ENCODE measurements at regions of chr18 and their contacts with region 1.

Region 1: DNA sequence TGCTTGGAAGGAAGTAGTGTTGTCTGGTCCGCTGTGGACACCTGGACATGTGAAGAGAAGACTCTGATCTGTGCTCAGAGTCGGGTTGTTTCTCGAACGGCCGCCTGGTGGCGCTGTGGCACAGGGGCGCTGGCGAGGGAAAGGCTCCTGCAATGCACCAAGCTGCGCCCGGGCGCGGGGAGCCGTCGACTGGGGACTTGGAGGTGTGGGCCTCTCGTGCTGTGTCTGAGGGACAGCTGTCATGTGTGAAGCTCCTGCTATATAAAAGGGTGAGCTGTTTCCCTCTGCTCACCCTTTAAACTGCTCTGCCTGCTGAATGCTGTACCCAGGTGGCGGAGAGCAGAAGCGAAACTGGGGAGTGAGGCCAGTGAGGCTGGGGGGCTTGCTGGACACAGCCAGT is 44.0 kb downstream of the GNAL start:
- DNase-seq: peak; percentile 54 to 97
- H3K4me3 ChIP-seq: no peak overlapping the region
- H3K27ac ChIP-seq: no peak overlapping the region
- H3K4me1 ChIP-seq: peaks cover 0 to 2% (median 0%) of the 10 kb centered on the region in 4 experiments; a peak in 2 of 7 replicates
- H3K27me3 ChIP-seq: peaks cover 0 to 3% (median 0%) of the 10 kb centered on the region in 4 experiments; a peak in 1 of 7 replicates
- CTCF ChIP-seq: peak; percentile 82 to 96 (median 92)
- EP300 ChIP-seq: no peak
- POLR2A ChIP-seq: no peak
- RAD21 ChIP-seq: peak; percentile 94 to 96

Region 2: DNA sequence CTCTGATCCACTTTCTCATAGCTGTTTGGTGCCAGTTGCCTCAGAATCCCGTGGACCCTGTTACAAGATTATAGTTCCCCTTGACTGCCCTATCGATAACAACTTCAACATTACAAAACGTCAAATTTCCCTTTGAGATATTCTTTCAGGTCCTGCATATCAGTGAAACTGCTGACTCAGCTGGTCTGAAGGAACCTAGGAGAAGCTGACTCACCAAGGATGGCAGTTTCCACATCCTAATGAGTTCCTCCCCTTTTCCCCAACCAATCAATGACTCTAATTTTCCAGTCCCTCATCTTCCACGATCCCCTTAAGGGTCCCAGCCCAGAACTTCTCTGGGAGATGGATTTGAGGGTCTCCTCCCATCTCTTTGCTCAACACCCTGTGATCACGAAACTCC is 71.6 kb before region 1 on chr18:
- CTCF ChIA-PET with region 1: interaction called, 109 read pairs
- POLR2A ChIA-PET with region 1: no interaction called
- DNase-seq: no peak
- H3K4me3 ChIP-seq: no peak overlapping the region
- H3K27ac ChIP-seq: no peak overlapping the region
- H3K4me1 ChIP-seq: no peaks in the 10 kb centered on the region
- H3K27me3 ChIP-seq: no peaks in the 10 kb centered on the region
- CTCF ChIP-seq: no peak
- EP300 ChIP-seq: no peak
- POLR2A ChIP-seq: no peak
- RAD21 ChIP-seq: no peak

Region 3: DNA sequence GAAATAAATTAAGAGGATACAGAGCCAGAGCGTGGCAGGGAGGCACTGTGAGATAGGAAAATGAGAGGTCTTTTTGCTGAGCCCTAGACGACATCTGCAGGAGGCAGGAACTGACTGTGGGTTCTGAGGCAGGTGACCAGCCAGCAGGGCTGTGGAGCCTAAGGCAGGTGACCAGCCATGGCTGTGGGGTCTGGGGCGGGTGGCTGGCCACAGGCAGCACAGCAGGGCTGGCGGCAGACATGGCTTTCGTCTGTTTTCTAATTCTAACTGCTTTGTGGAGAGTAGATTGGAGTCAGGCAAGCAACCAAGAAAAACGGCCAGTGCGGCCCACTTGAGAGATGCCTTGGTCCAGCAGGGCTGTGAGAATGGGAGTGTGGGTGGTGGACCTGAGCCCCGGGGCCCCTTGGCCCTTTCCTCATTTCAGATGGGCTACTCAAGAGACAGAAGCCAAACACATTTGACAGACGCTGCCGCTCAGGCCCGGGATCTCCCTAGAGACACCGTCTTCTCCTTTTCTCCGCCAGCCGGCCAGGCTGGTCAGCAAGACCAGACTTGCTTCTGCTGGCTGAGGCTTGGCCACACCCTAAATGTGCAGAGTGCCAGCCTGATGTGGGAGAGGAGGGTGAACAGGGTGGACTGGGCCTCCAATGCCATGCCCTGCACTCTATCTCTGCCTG is 63.6 kb before region 1 on chr18:
- CTCF ChIA-PET with region 1: interaction called, 16 read pairs
- POLR2A ChIA-PET with region 1: no interaction called
- DNase-seq: no peak
- H3K4me3 ChIP-seq: no peak overlapping the region
- H3K27ac ChIP-seq: no peak overlapping the region
- H3K4me1 ChIP-seq: no peaks in the 10 kb centered on the region; a peak in 2 of 7 replicates
- H3K27me3 ChIP-seq: no peaks in the 10 kb centered on the region; a peak in 2 of 7 replicates
- CTCF ChIP-seq: no peak
- EP300 ChIP-seq: no peak
- POLR2A ChIP-seq: no peak
- RAD21 ChIP-seq: no peak

Region 4: DNA sequence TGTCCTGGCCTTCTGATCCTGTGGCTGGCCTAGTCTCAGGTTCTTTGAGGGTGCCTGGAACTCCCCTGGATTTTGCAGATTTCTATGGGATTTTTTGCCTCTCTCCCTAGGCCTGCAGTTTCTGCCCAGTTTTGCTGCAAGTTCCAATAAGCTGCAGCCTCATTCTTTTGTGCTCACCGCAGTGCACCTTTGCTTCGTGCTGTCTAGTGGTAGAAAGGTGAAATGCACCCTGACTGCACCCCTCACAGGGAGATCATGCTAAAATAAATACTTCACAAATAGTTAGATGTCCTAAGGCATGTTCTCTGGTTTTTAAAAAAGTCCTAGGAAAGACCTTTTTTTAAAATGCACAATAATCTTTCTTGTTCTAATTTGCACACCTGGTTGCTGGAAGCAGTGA is 28.5 kb after region 1 on chr18:
- CTCF ChIA-PET with region 1: interaction called, 13 read pairs
- POLR2A ChIA-PET with region 1: no interaction called
- DNase-seq: no peak
- H3K4me3 ChIP-seq: no peak overlapping the region
- H3K27ac ChIP-seq: no peak overlapping the region
- H3K4me1 ChIP-seq: peaks cover 0 to 13% (median 7%) of the 10 kb centered on the region in 4 experiments
- H3K27me3 ChIP-seq: no peaks in the 10 kb centered on the region
- CTCF ChIP-seq: peak; percentile 30 to 55 (median 43); a peak in 3 of 4 replicates
- EP300 ChIP-seq: no peak
- POLR2A ChIP-seq: no peak
- RAD21 ChIP-seq: peak; percentile 36 to 51

Region 5: GRCh38 chr18:11877497-11878135 is 144.6 kb after region 1 on chr18:
- CTCF ChIA-PET with region 1: interaction called, 11 read pairs
- POLR2A ChIA-PET with region 1: no interaction called
- DNase-seq: no peak
- H3K4me3 ChIP-seq: no peak overlapping the region
- H3K27ac ChIP-seq: no peak overlapping the region
- H3K4me1 ChIP-seq: no peaks in the 10 kb centered on the region; a peak in 1 of 7 replicates
- H3K27me3 ChIP-seq: no peaks in the 10 kb centered on the region
- CTCF ChIP-seq: no peak
- EP300 ChIP-seq: no peak
- POLR2A ChIP-seq: no peak
- RAD21 ChIP-seq: no peak; a peak in 1 of 4 replicates